Activated B cell treated with CpG ODN at 0.5 μM for 24 hours (primary cell): ENCODE measurements at regions of chr7 and their contacts with region 1.

Region 1: DNA sequence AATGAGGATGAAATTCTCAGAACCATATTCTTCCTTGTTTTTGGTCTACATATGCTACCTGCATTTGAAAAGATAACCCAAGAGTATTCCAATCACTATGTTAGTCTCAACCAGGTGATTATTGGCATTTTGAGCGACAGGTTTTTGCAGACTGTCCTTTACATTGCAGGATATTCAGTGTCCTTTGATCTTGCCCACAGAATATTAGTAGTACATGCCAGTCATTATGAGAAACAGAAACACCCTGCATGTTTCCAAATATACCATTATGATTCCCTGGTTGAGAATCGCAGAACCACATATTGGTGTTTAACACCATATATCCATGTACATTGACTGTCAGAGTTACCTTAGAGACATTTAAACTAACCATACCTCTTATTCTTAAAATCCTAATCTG is 30.6 kb downstream of the TMEM243 start:
- DNase-seq: no peak
- ATAC-seq: no peak
- H3K4me3 Mint-ChIP-seq: no peak overlapping the region
- H3K27ac Mint-ChIP-seq: peak overlapping the region; percentile 71
- H3K4me1 Mint-ChIP-seq: peaks cover 28% of the 10 kb centered on the region
- H3K27me3 Mint-ChIP-seq: no peaks in the 10 kb centered on the region
- CTCF ChIP-seq: no peak

Region 2: GRCh38 chr7:86846494-86847190 is 342.3 kb before region 1 on chr7:
- CTCF ChIA-PET with region 1: no interaction called
- POLR2A ChIA-PET with region 1: no interaction called
- intact Hi-C with region 1: no loop called
- DNase-seq: no peak
- ATAC-seq: no peak
- H3K4me3 Mint-ChIP-seq: no peak overlapping the region
- H3K27ac Mint-ChIP-seq: no peak overlapping the region
- H3K4me1 Mint-ChIP-seq: no peaks in the 10 kb centered on the region
- H3K27me3 Mint-ChIP-seq: no peaks in the 10 kb centered on the region
- CTCF ChIP-seq: no peak

Region 3: GRCh38 chr7:87075671-87076404 is 113.1 kb before region 1 on chr7:
- CTCF ChIA-PET with region 1: no interaction called
- POLR2A ChIA-PET with region 1: no interaction called
- intact Hi-C with region 1: no loop called
- DNase-seq: no peak
- ATAC-seq: no peak
- H3K4me3 Mint-ChIP-seq: no peak overlapping the region
- H3K27ac Mint-ChIP-seq: no peak overlapping the region
- H3K4me1 Mint-ChIP-seq: peaks cover 7% of the 10 kb centered on the region
- H3K27me3 Mint-ChIP-seq: peaks cover 15% of the 10 kb centered on the region
- CTCF ChIP-seq: no peak

Region 4: GRCh38 chr7:87173471-87173870 is 15.5 kb before region 1 on chr7:
- CTCF ChIA-PET with region 1: no interaction called
- POLR2A ChIA-PET with region 1: no interaction called
- intact Hi-C with region 1: loop called (anchors 2 kb)
- DNase-seq: no peak
- ATAC-seq: no peak
- H3K4me3 Mint-ChIP-seq: no peak overlapping the region
- H3K27ac Mint-ChIP-seq: peak overlapping the region; percentile 9
- H3K4me1 Mint-ChIP-seq: peaks cover 4% of the 10 kb centered on the region
- H3K27me3 Mint-ChIP-seq: no peaks in the 10 kb centered on the region
- CTCF ChIP-seq: no peak

Region 5: DNA sequence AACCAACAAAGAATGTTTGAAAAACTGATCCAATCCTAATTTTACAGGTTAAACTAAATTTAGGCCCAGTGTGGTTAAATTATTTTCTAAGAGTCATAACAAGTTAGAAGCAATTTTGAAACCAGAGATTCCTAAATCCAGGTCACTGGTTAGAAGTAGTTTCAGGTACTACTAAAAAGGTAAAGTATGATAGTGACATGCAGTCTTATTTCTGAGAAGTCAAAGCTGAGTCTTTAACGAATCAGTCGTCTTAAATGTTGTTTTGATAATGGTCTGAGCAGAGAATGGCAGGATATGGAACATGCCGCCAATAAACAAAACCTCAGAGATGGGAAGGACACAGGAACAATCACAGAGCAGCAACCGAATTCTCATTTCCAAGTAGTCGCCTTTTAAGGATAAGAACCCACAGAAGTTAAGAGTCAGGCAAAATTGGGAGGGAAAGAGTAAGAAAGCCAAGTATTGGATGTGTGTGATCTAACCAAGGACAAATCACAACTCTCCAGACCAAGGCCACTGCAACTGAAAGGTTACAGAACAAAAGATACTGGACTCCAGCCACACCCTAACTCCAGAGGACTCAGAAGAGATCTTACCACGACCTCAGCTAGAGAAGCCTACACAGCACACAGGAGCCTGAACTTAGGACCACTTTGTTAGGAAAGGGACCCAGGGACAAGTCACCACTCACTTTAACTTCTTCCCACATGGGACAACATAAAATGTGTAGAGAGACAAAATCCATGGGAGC is 10.9 kb after region 1 on chr7:
- CTCF ChIA-PET with region 1: no interaction called
- POLR2A ChIA-PET with region 1: interaction called, 9 read pairs
- intact Hi-C with region 1: loop called (anchors 2 kb)
- DNase-seq: no peak
- ATAC-seq: no peak
- H3K4me3 Mint-ChIP-seq: peak overlapping the region; percentile 0
- H3K27ac Mint-ChIP-seq: peak overlapping the region; percentile 71
- H3K4me1 Mint-ChIP-seq: peaks cover 73% of the 10 kb centered on the region
- H3K27me3 Mint-ChIP-seq: no peaks in the 10 kb centered on the region
- CTCF ChIP-seq: no peak

Region 6: DNA sequence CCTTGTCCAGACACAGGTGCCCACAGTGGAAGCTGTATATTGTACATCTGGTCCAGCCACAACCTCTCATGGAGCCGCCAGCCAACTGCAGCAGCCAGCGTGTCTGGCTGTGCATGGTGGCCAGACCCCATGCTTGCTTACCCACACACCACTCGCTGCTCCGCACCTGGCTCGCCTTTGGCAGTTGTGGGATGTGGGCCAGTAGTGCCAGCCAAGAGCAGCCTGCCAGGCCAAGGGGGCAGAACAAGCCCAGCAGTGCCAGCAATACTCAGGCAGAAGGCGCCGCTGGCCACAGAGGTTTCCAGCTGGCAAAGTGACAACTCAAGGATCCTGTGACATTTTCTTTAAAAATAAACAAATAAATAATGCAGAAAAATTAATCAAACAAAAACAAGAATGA is 42.3 kb after region 1 on chr7:
- CTCF ChIA-PET with region 1: interaction called, 4 read pairs
- POLR2A ChIA-PET with region 1: no interaction called
- intact Hi-C with region 1: loop called (anchors 2 kb)
- DNase-seq: no peak
- ATAC-seq: no peak
- H3K4me3 Mint-ChIP-seq: no peak overlapping the region
- H3K27ac Mint-ChIP-seq: no peak overlapping the region
- H3K4me1 Mint-ChIP-seq: peaks cover 8% of the 10 kb centered on the region
- H3K27me3 Mint-ChIP-seq: no peaks in the 10 kb centered on the region
- CTCF ChIP-seq: no peak